Activated CD8-positive, alpha-beta T cell treated with anti-CD3 and anti-CD28 coated beads, Interleukin-2, amount 10 ng/mL, durations not matched to agents 7 days and 5 days (primary cell): ENCODE measurements at regions of chr15 and their contacts with region 1.

Region 1: DNA sequence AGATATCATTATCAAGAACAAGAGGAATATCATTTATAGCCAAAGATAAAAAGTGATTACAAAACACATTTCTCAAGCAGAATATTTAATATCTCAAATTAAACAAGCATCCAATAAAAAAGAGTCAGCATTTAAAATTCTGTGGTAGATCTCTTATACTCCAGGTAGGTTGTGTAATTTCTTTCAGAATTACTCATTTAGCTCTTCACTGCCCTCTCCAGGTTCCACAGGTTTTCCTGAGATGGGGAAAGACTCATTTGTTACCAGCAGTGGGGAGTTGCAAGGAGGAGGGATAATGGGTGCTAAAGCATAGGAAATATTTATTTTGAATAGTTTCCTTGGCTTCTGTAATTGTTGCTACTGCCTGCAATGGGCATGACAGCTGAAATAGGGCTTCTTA is 83.1 kb upstream of the RASGRP1 start:
- DNase-seq: no peak
- ATAC-seq: no peak
- H3K4me3 Mint-ChIP-seq: no peak overlapping the region
- H3K27ac Mint-ChIP-seq: no peak overlapping the region
- H3K4me1 Mint-ChIP-seq: peaks cover 78% of the 10 kb centered on the region
- H3K27me3 Mint-ChIP-seq: no peaks in the 10 kb centered on the region

Region 2: GRCh38 chr15:38610748-38611147 is 36.9 kb before region 1 on chr15:
- CTCF ChIA-PET with region 1: interaction called, 39 read pairs
- POLR2A ChIA-PET with region 1: interaction called, 45 read pairs
- DNase-seq: peak; percentile 68
- ATAC-seq: peak; percentile 60
- H3K4me3 Mint-ChIP-seq: peak overlapping the region; percentile 71
- H3K27ac Mint-ChIP-seq: peak overlapping the region; percentile 98
- H3K4me1 Mint-ChIP-seq: peaks cover 73% of the 10 kb centered on the region
- H3K27me3 Mint-ChIP-seq: no peaks in the 10 kb centered on the region

Region 3: DNA sequence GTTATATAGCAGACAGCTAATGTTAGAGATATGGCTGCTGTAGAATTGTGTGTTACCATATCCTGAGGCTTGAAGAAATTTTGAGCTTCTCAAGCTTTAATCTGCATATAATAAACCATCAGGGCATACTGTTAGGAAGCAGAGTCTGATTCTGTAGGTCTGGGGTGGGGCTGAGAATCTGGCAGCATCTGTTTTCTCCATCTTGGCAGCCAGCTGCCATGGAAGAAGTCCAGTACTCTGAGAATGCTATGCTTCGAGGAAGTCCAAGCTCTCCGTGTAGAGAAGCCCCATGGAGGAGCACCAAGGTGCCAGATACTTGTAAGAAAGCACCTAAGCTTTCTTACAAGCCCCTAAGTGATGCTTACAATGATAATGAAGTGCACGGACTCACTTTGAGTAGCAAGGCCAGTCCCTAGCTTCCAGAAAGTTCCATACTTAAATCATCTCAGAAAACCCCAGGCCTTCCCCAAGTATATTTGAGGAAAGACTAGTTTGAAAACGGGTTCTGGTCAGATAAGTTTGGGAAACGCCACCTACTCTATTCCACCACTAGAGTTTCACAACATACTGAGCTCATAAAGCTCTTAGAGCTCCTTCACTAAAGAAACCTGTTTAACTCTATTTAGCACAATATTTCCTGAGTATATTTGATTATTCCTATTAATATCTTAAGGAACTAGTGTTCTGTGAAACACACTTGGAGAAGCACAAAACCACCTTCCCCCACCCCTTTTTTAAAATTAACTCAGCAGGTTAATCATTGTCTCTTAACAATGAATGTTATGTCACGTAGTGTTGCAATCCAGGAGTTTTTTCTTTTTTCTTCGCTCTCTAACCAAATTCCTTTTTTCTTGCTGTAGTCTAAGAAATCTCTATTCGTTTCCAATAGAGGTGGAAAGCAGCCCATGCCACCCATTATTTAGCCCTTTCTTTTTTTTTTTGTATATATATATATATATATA is 23.2 kb before region 1 on chr15:
- CTCF ChIA-PET with region 1: interaction called, 14 read pairs
- POLR2A ChIA-PET with region 1: interaction called, 6 read pairs
- DNase-seq: no peak
- ATAC-seq: no peak
- H3K4me3 Mint-ChIP-seq: no peak overlapping the region
- H3K27ac Mint-ChIP-seq: no peak overlapping the region
- H3K4me1 Mint-ChIP-seq: peaks cover 32% of the 10 kb centered on the region
- H3K27me3 Mint-ChIP-seq: no peaks in the 10 kb centered on the region

Region 4: GRCh38 chr15:38631126-38632075 is 16.3 kb before region 1 on chr15:
- CTCF ChIA-PET with region 1: interaction called, 21 read pairs
- POLR2A ChIA-PET with region 1: interaction called, 15 read pairs
- DNase-seq: no peak
- ATAC-seq: no peak
- H3K4me3 Mint-ChIP-seq: no peak overlapping the region
- H3K27ac Mint-ChIP-seq: peak overlapping the region; percentile 51
- H3K4me1 Mint-ChIP-seq: peaks cover 32% of the 10 kb centered on the region
- H3K27me3 Mint-ChIP-seq: no peaks in the 10 kb centered on the region

Region 5: DNA sequence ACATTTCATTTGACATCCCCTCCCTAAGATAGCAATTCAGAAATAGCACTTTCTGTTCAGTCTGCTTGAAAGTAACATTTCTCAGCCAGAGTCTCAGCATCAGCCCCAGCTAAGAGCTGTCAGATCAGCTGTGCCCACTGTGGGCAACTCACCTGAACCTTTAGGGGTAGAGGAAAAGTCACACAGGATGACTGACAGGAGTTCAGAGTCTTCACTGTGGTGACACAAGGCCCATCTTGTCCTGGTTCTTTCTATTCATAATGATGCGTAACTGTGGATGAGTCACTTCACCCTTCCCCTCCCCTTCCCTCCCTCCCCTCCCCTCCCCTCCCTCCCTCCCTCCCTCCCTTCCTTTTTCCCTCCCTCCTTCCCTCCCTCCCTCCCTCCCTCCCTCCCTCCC is 13.1 kb after region 1 on chr15:
- CTCF ChIA-PET with region 1: interaction called, 56 read pairs
- POLR2A ChIA-PET with region 1: interaction called, 164 read pairs
- DNase-seq: peak; percentile 39
- ATAC-seq: peak; percentile 54
- H3K4me3 Mint-ChIP-seq: no peak overlapping the region
- H3K27ac Mint-ChIP-seq: peak overlapping the region; percentile 60
- H3K4me1 Mint-ChIP-seq: peaks cover 75% of the 10 kb centered on the region
- H3K27me3 Mint-ChIP-seq: no peaks in the 10 kb centered on the region

Region 6: GRCh38 chr15:38671675-38672254 is 24.1 kb after region 1 on chr15:
- CTCF ChIA-PET with region 1: interaction called, 157 read pairs
- POLR2A ChIA-PET with region 1: interaction called, 164 read pairs
- DNase-seq: peak; percentile 44
- ATAC-seq: peak; percentile 34
- H3K4me3 Mint-ChIP-seq: peak overlapping the region; percentile 44
- H3K27ac Mint-ChIP-seq: peak overlapping the region; percentile 91
- H3K4me1 Mint-ChIP-seq: peaks cover 84% of the 10 kb centered on the region
- H3K27me3 Mint-ChIP-seq: no peaks in the 10 kb centered on the region